ENCODE measurements at regions of chr1 and their contacts with region 1.

Region 1: GRCh38 chr1:112715264-112716053 is at the start of gene PPM1J:
- DNase-seq: peak; percentile 99 to 100 (median 100)
- ATAC-seq: peak; percentile 92
- H3K4me3 ChIP-seq: peak within 1 kb of the TSS; percentile 69
- H3K27ac ChIP-seq: peak within 1 kb of the TSS; percentile 32
- H3K4me1 ChIP-seq: no peaks in the 10 kb centered on the region
- H3K27me3 ChIP-seq: no peaks in the 10 kb centered on the region
- total RNA-seq, gene PPM1J: 5.5 to 9.0 (median 6.3) TPM

Region 2: DNA sequence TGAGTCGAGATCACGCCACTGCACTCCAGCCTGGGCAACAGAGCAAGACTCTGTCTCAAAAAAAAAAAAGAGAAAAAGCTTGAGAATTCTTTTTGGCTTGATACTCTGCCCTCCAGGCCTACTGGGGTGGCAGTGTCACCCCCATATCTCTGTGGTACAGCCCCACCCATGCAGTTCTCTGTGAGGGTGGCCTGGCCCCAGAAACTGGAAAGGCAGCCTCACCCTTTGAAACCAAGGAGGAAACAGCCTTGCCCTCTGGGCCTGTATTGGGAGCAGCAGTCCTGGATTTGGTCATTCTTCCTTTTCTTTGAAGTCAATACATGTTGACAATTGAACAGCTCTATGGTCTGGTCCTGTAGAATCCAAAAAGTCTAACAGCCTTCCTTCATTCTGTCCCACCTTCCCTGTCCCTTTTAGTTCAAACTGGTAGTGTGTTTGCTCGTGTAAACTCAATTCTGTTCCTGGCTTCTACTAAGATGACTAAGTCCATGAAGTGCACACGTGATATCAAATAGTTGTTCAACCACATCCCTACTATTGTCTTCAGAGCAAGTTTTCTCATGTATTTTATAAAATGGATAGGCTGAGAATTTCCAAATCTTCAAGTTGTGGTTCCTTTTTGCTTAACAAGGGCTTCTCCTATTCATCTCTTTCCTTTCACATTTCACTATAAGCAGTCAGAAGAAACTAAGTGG is 109.7 kb before region 1 on chr1:
- intact Hi-C with region 1: no loop called
- DNase-seq: no peak
- ATAC-seq: no peak
- H3K4me3 ChIP-seq: no peak overlapping the region
- H3K27ac ChIP-seq: no peak overlapping the region
- H3K4me1 ChIP-seq: no peaks in the 10 kb centered on the region
- H3K27me3 ChIP-seq: no peaks in the 10 kb centered on the region

Region 3: GRCh38 chr1:112803906-112804762 is 88.7 kb after region 1 on chr1:
- intact Hi-C with region 1: loop called (anchors 2 to 10 kb)
- DNase-seq: peak; percentile 55 to 86 (median 83)
- ATAC-seq: peak; percentile 86 to 87
- H3K4me3 ChIP-seq: no peak overlapping the region
- H3K27ac ChIP-seq: no peak overlapping the region
- H3K4me1 ChIP-seq: no peaks in the 10 kb centered on the region
- H3K27me3 ChIP-seq: no peaks in the 10 kb centered on the region